ENCODE measurements at regions of chr10 and their contacts with region 1.

Region 1: GRCh38 chr10:116687633-116688032 is 54.7 kb downstream of the HSPA12A start:
- DNase-seq: no peak
- H3K4me3 Mint-ChIP-seq: no peak overlapping the region
- H3K27ac Mint-ChIP-seq: no peak overlapping the region
- H3K4me1 Mint-ChIP-seq: no peaks in the 10 kb centered on the region
- H3K27me3 Mint-ChIP-seq: peaks cover 16% of the 10 kb centered on the region
- CTCF ChIP-seq: no peak

Region 2: DNA sequence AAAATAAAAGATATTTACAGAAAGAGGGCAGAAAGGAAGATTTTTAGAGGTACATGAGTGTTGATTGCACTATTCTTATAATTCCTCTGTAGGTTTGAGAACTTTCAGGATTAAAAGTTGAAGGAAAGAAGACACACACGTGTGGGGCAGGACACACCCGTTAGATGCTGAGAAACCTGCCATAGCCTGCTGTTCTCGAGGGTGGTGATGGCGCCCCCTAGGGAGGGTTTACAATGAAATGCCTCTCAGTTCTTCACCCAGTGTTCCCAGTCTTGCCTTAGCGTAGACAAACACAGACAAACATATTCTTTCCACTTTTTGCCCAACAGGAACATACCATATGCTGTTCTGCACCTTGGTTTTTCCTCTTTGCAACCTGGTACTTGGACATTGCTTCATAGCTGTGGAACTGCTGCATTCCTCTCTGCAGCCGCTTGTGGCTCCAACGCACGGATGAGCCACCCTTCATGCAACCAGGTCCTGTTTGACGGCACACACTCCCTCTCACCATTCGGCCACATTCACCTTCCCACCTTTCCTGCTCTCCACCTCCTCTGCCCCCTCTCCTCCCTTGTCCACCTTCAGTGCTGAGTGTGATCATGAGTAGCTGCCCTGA is 78.0 kb after region 1 on chr10:
- CTCF ChIA-PET with region 1: no interaction called
- intact Hi-C with region 1: loop called (anchors 1 kb)
- DNase-seq: peak; percentile 32
- H3K4me3 Mint-ChIP-seq: no peak overlapping the region
- H3K27ac Mint-ChIP-seq: no peak overlapping the region
- H3K4me1 Mint-ChIP-seq: no peaks in the 10 kb centered on the region
- H3K27me3 Mint-ChIP-seq: peaks cover 21% of the 10 kb centered on the region
- CTCF ChIP-seq: peak; percentile 35

Measured in Calu3 (cell line).